Tibial artery (tissue), 4 donors: ENCODE measurements at regions of chr10 and their contacts with region 1.

Region 1: GRCh38 chr10:95290461-95291364 is at the start of gene PDLIM1:
- DNase-seq: peak; percentile 70 to 88
- H3K4me3 ChIP-seq: peak within 1 kb of the TSS; percentile 89 to 98
- H3K27ac ChIP-seq: peak within 1 kb of the TSS; percentile 93 to 94
- H3K4me1 ChIP-seq: peaks cover 0 to 68% (median 38%) of the 10 kb centered on the region in 4 donors
- H3K27me3 ChIP-seq: no peaks in the 10 kb centered on the region
- CTCF ChIP-seq: peak; percentile 41 to 58

Region 2: DNA sequence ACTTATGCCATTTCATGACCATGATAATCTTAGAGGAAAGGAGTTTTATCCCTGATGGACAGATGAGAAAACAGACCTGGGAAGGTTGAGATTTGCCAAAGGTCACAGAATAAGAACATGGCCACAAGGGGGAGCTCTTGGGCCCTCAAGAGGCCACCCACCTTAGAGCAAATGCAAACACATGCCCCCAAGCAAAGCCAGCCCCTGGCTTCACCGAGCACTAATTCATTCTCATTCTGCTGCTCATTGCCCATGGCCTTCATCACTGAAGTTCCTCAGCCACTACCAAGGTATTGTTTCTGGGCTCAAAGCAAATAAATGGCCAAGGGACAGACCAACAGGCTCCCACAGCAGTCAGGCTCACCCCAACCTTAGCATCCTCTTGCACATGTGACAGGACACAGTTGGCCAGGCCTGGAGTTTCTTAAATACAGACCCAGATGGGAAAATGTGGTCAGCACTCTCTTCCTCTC is 44.1 kb before region 1 on chr10:
- intact Hi-C with region 1: loop called (anchors 5 kb)
- DNase-seq: peak; percentile 74 to 80
- H3K4me3 ChIP-seq: no peak overlapping the region
- H3K27ac ChIP-seq: peak overlapping the region; percentile 58 to 70
- H3K4me1 ChIP-seq: peaks cover 0 to 55% (median 41%) of the 10 kb centered on the region in 4 donors
- H3K27me3 ChIP-seq: no peaks in the 10 kb centered on the region
- CTCF ChIP-seq: peak; percentile 78 to 79

Region 3: DNA sequence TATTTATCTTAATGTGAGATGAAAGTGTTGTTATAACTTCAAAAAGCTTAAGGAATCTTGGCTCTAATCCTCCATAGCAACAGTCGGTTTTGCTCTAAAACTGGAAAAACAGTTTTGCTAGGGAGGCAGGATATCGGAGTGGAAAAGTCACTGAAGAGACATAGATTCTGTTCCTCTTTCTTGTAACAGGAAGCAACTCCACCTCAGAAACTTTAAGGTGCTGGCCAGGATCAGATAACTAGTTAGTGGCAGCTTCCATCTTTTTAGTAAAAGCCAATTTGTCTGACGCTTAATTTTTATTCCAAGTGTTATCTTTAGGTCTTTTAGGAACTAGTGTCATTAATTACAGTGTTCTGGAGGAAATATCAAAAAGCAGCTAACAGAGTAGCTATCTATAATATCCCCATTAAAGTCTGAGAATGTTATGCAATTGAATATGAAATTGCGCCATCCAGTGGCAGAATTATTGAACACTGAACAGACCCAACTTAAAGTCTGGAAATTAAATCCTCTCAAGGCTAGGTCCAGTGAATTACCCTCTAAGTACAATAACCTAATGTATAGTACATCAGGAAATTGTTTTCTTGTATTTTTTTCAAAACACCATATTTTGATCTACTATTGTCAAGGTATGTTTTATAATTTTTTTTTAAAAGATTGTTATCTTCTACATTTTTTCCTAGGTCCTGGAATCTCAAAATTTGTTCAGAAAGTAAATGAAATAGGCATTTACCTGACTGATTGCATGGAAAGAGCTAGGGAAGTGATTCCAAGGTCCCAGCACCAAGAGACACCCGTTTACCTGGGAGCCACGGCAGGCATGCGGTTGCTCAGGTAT is 551.2 kb after region 1 on chr10:
- intact Hi-C with region 1: no loop called
- DNase-seq: peak in 1 of 2 donors; percentile 48
- H3K4me3 ChIP-seq: no peak overlapping the region
- H3K27ac ChIP-seq: peak overlapping the region; percentile 36 to 39
- H3K4me1 ChIP-seq: peaks cover 0 to 49% (median 15%) of the 10 kb centered on the region in 4 donors
- H3K27me3 ChIP-seq: no peaks in the 10 kb centered on the region
- CTCF ChIP-seq: peak; percentile 65 to 84